Activated CD4-positive, alpha-beta memory T cell treated with anti-CD3 and anti-CD28 coated beads for 36 hours (primary cell): ENCODE measurements at regions of chr11 and their contacts with region 1.

Region 1: GRCh38 chr11:9534791-9535781 is 38.4 kb upstream of the WEE1 start:
- DNase-seq: peak; percentile 87
- H3K4me3 Mint-ChIP-seq: no peak overlapping the region
- H3K27ac Mint-ChIP-seq: no peak overlapping the region
- H3K4me1 Mint-ChIP-seq: no peaks in the 10 kb centered on the region
- H3K27me3 Mint-ChIP-seq: no peaks in the 10 kb centered on the region

Region 2: DNA sequence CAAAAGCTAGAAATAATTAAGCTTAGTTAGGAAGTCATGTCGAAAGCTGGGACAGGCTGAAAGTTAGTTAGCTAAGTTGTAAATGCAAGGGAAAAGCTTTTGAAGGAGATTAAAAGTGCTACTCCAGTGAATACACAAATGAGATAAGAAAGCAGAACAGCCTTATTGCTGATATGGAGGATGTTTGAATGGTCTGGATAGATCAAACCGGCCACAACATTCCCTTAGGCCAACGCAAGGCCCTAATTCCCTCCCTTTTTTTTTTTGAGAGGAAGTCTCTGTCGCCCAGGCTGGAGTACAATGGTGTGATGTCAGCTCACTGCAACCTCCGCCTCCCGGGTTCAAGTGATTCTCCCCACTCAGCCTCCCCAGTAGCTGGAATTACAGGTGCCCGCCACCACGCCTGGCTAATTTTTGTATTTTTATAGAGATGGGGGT is 15.1 kb after region 1 on chr11:
- CTCF ChIA-PET with region 1: interaction called, 17 read pairs
- POLR2A ChIA-PET with region 1: no interaction called
- intact Hi-C with region 1: no loop called
- DNase-seq: no peak
- H3K4me3 Mint-ChIP-seq: no peak overlapping the region
- H3K27ac Mint-ChIP-seq: no peak overlapping the region
- H3K4me1 Mint-ChIP-seq: no peaks in the 10 kb centered on the region
- H3K27me3 Mint-ChIP-seq: no peaks in the 10 kb centered on the region

Region 3: GRCh38 chr11:9573052-9573774 is 38.1 kb after region 1 on chr11 and contains the start of gene WEE1:
- CTCF ChIA-PET with region 1: interaction called, 19 read pairs
- POLR2A ChIA-PET with region 1: interaction called, 8 read pairs
- intact Hi-C with region 1: loop called (anchors 2 kb)
- DNase-seq: peak; percentile 99
- H3K4me3 Mint-ChIP-seq: peak within 1 kb of the TSS; percentile 97
- H3K27ac Mint-ChIP-seq: peak within 1 kb of the TSS; percentile 82
- H3K4me1 Mint-ChIP-seq: peaks cover 36% of the 10 kb centered on the region
- H3K27me3 Mint-ChIP-seq: no peaks in the 10 kb centered on the region
- total RNA-seq, gene WEE1: 47.8 to 52.4 TPM

Region 4: DNA sequence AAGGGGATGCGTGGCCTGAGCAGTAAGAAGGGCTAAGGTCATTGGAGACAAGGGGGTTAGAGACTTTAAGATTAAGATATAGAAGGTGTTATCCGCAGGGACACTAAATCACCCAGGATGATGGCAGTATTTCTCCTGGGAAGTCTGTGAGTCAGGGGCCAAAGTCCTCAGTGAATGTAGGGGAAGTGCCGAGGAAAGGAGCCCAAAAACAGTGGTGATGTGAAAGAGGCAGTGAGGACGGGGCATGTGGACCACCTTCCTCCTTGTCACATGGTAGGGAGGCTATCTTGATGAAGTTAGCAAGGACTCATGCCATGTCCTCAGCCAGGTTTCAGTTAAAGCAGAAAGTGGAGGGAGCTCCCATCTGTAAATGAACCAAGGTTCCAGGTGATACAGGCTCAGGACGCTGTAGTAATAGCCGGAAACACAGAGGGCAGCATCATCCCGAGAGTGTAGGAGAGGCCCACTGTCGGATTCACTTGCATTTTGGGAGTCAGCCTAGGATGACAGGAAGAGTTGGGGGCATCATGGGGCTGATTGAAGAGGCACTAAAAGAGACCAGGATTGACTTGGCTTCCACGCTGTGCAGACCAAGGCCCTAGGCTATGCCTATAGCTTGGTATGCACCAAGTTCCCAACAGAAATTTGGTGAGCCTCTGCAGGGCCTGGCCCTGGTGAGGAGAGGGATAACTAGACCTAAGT is 71.9 kb after region 1 on chr11:
- CTCF ChIA-PET with region 1: interaction called, 129 read pairs
- POLR2A ChIA-PET with region 1: interaction called, 4 read pairs
- intact Hi-C with region 1: no loop called
- DNase-seq: no peak
- H3K4me3 Mint-ChIP-seq: no peak overlapping the region
- H3K27ac Mint-ChIP-seq: no peak overlapping the region
- H3K4me1 Mint-ChIP-seq: peaks cover 10% of the 10 kb centered on the region
- H3K27me3 Mint-ChIP-seq: no peaks in the 10 kb centered on the region

Region 5: GRCh38 chr11:10322830-10323792 is 788.0 kb after region 1 on chr11:
- CTCF ChIA-PET with region 1: interaction called, 13 read pairs
- POLR2A ChIA-PET with region 1: no interaction called
- intact Hi-C with region 1: loop called (anchors 5 kb)
- DNase-seq: peak; percentile 67
- H3K4me3 Mint-ChIP-seq: peak overlapping the region; percentile 48
- H3K27ac Mint-ChIP-seq: peak overlapping the region; percentile 77
- H3K4me1 Mint-ChIP-seq: peaks cover 13% of the 10 kb centered on the region
- H3K27me3 Mint-ChIP-seq: peaks cover 7% of the 10 kb centered on the region